ENCODE measurements at regions of chr1 and their contacts with region 1.

Region 1: GRCh38 chr1:79667848-79668696 is 661.5 kb upstream of the ADGRL4 start:
- DNase-seq: no peak
- ATAC-seq: peak; percentile 70
- H3K4me3 Mint-ChIP-seq: no peak overlapping the region
- H3K27ac Mint-ChIP-seq: peak overlapping the region; percentile 47
- H3K4me1 Mint-ChIP-seq: peaks cover 11% of the 10 kb centered on the region
- H3K27me3 Mint-ChIP-seq: no peaks in the 10 kb centered on the region
- CTCF ChIP-seq: no peak

Region 2: GRCh38 chr1:79694241-79694640 is 26.2 kb after region 1 on chr1:
- CTCF ChIA-PET with region 1: no interaction called
- POLR2A ChIA-PET with region 1: no interaction called
- intact Hi-C with region 1: loop called (anchors 1 kb)
- DNase-seq: no peak
- ATAC-seq: no peak
- H3K4me3 Mint-ChIP-seq: no peak overlapping the region
- H3K27ac Mint-ChIP-seq: no peak overlapping the region
- H3K4me1 Mint-ChIP-seq: peaks cover 5% of the 10 kb centered on the region
- H3K27me3 Mint-ChIP-seq: no peaks in the 10 kb centered on the region
- CTCF ChIP-seq: no peak

Region 3: DNA sequence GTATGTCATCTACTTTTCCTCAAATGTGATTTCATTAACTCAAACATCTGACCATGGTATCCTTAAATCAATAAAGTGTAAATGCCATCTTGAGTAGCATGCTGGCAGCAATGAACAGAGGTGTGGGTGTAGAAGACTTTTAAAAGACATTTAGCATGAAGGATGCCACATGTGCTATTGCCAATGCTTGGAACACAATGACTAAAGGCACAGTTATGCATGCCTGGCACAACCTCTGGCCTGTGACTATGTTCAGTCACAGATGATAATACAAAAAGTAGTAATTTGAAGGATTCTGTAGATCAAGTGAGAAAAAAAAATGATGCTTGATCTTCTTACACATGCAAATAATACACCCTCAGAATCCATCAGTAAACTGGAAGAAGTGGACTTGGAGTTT is 277.3 kb after region 1 on chr1:
- CTCF ChIA-PET with region 1: no interaction called
- POLR2A ChIA-PET with region 1: no interaction called
- intact Hi-C with region 1: no loop called
- DNase-seq: no peak
- ATAC-seq: no peak
- H3K4me3 Mint-ChIP-seq: no peak overlapping the region
- H3K27ac Mint-ChIP-seq: no peak overlapping the region
- H3K4me1 Mint-ChIP-seq: no peaks in the 10 kb centered on the region
- H3K27me3 Mint-ChIP-seq: no peaks in the 10 kb centered on the region
- CTCF ChIP-seq: no peak

Region 4: GRCh38 chr1:80282536-80282935 is 614.5 kb after region 1 on chr1:
- CTCF ChIA-PET with region 1: no interaction called
- POLR2A ChIA-PET with region 1: no interaction called
- intact Hi-C with region 1: no loop called
- DNase-seq: no peak
- ATAC-seq: no peak
- H3K4me3 Mint-ChIP-seq: no peak overlapping the region
- H3K27ac Mint-ChIP-seq: no peak overlapping the region
- H3K4me1 Mint-ChIP-seq: no peaks in the 10 kb centered on the region
- H3K27me3 Mint-ChIP-seq: no peaks in the 10 kb centered on the region
- CTCF ChIP-seq: no peak

Region 5: DNA sequence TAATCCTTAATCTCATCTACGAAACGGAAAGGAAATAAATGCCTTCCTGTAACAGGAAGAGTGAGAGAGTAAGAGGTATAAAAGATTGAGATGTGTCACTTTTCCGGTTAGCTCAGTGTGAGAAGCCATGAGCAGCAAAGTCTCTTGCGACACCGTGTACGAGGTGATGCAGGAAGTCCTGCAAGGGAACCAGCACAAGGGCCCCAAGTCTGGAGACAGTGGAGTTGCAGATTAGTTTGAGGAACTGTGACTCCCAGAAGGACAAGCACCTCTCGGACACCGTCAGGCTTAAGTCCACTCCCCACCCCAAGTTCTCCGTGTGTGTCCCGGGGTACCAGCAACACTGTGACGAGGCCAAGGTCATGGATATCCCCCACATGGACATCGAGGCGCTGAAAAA is 1540.4 kb after region 1 on chr1:
- CTCF ChIA-PET with region 1: no interaction called
- POLR2A ChIA-PET with region 1: no interaction called
- intact Hi-C with region 1: no loop called
- DNase-seq: no peak
- ATAC-seq: no peak
- H3K4me3 Mint-ChIP-seq: no peak overlapping the region
- H3K27ac Mint-ChIP-seq: no peak overlapping the region
- H3K4me1 Mint-ChIP-seq: no peaks in the 10 kb centered on the region
- H3K27me3 Mint-ChIP-seq: no peaks in the 10 kb centered on the region
- CTCF ChIP-seq: no peak